Vagina (tissue), 2 donors: ENCODE measurements at regions of chr9 and their contacts with region 1.

Region 1: DNA sequence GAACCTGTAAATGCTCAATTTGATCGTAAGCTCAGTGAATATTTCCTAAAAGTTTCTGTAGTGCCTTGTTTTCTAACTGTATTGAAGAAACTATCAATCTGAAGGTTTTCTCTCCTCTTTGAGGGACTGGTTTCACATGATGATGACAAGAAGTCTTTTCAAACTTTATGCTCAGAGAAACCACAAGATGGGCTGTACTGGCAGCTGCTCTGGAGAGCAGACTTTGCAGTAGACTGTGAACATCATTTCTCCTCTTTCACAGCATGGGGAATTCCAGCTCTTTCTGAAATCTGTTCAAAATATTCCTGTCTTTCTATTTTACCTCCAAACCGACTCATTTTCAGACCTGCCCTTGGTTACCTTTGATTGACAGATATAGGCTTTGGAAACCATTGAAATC is 194.4 kb downstream of the IZUMO3 start:
- DNase-seq: no peak
- H3K4me3 ChIP-seq: no peak overlapping the region
- H3K27ac ChIP-seq: no peak overlapping the region
- H3K4me1 ChIP-seq: no peaks in the 10 kb centered on the region
- H3K27me3 ChIP-seq: no peaks in the 10 kb centered on the region
- CTCF ChIP-seq: no peak
- POLR2A ChIP-seq: no peak

Region 2: DNA sequence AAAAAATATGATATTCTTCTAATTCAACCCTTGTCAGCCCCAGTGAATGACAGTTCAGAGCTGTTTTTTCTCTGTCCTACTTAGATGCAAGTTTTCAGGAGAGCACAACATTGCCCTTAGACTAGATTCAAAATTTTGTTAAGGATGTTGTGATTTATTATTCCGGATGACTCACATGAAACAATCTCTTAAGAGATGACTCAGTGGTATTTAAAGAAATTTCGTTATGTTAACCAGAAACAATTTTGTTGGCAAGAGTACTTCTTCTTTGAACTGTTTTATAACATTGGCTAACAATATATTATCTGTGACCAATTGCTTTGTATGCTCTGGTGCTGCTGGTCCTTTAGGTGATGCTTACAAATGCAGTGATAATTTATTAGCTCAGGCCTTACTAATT is 62.4 kb after region 1 on chr9:
- intact Hi-C with region 1: loop called (anchors 2 kb)
- DNase-seq: no peak
- H3K4me3 ChIP-seq: no peak overlapping the region
- H3K27ac ChIP-seq: no peak overlapping the region
- H3K4me1 ChIP-seq: no peaks in the 10 kb centered on the region
- H3K27me3 ChIP-seq: no peaks in the 10 kb centered on the region
- CTCF ChIP-seq: no peak
- POLR2A ChIP-seq: no peak